Activated CD4-positive, alpha-beta memory T cell treated with anti-CD3 and anti-CD28 coated beads for 36 hours (primary cell): ENCODE measurements at regions of chr5 and their contacts with region 1.

Region 1: GRCh38 chr5:133205204-133205603 is 153.4 kb downstream of the HSPA4 start:
- DNase-seq: no peak
- H3K4me3 Mint-ChIP-seq: no peak overlapping the region
- H3K27ac Mint-ChIP-seq: no peak overlapping the region
- H3K4me1 Mint-ChIP-seq: peaks cover 2% of the 10 kb centered on the region
- H3K27me3 Mint-ChIP-seq: no peaks in the 10 kb centered on the region

Region 2: GRCh38 chr5:132915681-132916080 is 289.5 kb before region 1 on chr5:
- CTCF ChIA-PET with region 1: no interaction called
- POLR2A ChIA-PET with region 1: no interaction called
- intact Hi-C with region 1: loop called (anchors 5 kb)
- DNase-seq: no peak
- H3K4me3 Mint-ChIP-seq: no peak overlapping the region
- H3K27ac Mint-ChIP-seq: no peak overlapping the region
- H3K4me1 Mint-ChIP-seq: peaks cover 1% of the 10 kb centered on the region
- H3K27me3 Mint-ChIP-seq: no peaks in the 10 kb centered on the region